PC-3 (cell line): ENCODE measurements at regions of chr5 and their contacts with region 1.

Region 1: DNA sequence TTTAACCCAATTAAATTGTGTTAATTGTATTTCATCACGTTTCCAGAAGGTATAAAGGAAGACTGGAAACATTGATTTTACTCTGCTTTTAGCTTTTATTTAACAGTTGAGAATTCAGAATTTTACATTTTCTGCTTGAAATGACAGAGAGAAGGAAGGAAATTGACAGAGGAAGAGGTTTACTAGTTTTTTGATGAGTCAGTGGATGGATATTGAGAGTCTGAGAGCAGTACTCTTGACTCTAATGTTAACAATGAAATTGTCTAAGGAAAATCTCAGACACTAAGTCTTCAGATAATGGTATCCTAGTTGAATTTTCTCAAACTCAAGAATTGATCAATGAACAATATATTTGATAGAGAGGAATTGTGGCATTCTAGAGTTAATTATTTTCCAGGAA is 60.6 kb downstream of the IPO11 start:
- DNase-seq: peak; percentile 47
- ATAC-seq: peak; percentile 60
- H3K4me3 ChIP-seq: no peak overlapping the region
- H3K27ac ChIP-seq: 0 out of 2 replicates have a peak overlapping the region, but pooled peaks have one; percentile 12
- H3K4me1 ChIP-seq: peaks cover 22% of the 10 kb centered on the region
- H3K27me3 ChIP-seq: no peaks in the 10 kb centered on the region
- CTCF ChIP-seq: no peak

Region 2: DNA sequence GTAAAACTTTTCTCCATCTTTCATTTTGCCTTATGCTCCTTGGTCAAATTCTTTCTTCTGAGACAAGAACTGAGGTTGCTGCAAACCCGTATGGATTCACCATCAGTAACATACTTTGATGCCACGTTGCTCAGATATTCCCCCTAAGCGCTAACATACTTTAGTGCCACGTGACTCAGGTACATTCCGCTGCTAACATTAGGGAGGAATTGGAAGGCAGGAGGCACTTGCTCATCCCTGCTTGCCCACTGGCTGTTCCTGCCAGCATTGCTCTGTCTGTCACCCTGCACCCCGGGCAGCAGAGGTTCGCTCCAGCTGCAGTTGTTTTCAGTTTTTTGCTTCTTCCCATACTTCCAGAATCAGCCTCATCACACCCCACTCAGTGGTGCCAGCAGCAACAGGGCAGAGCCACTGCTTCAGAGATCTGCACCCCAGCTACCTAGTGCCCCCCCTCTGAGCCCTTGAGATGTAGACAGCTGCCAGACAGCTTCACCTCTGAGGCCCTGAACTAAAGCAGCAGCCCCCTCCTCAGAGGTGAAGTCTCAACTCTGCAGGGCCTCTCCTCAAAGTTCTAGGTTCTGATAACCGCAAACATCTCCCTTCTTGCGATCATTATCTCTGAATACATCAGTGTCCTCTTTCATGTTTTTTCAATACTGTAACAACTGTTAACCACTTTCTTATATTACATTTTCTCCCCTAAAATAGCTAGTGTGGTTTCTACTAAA is 395.2 kb before region 1 on chr5:
- CTCF ChIA-PET with region 1: no interaction called
- POLR2A ChIA-PET with region 1: no interaction called
- intact Hi-C with region 1: no loop called
- DNase-seq: no peak
- ATAC-seq: no peak
- H3K4me3 ChIP-seq: no peak overlapping the region
- H3K27ac ChIP-seq: no peak overlapping the region
- H3K4me1 ChIP-seq: peaks cover 15% of the 10 kb centered on the region
- H3K27me3 ChIP-seq: no peaks in the 10 kb centered on the region
- CTCF ChIP-seq: no peak

Region 3: GRCh38 chr5:62596096-62596495 is 122.9 kb after region 1 on chr5:
- CTCF ChIA-PET with region 1: no interaction called
- POLR2A ChIA-PET with region 1: no interaction called
- intact Hi-C with region 1: loop called (anchors 5 kb)
- DNase-seq: no peak
- ATAC-seq: peak; percentile 18
- H3K4me3 ChIP-seq: no peak overlapping the region
- H3K27ac ChIP-seq: no peak overlapping the region
- H3K4me1 ChIP-seq: peaks cover 19% of the 10 kb centered on the region
- H3K27me3 ChIP-seq: no peaks in the 10 kb centered on the region
- CTCF ChIP-seq: no peak

Region 4: GRCh38 chr5:62606878-62607277 is 133.7 kb after region 1 on chr5:
- CTCF ChIA-PET with region 1: no interaction called
- POLR2A ChIA-PET with region 1: no interaction called
- intact Hi-C with region 1: no loop called
- DNase-seq: no peak
- ATAC-seq: peak; percentile 22
- H3K4me3 ChIP-seq: no peak overlapping the region
- H3K27ac ChIP-seq: no peak overlapping the region
- H3K4me1 ChIP-seq: no peaks in the 10 kb centered on the region
- H3K27me3 ChIP-seq: no peaks in the 10 kb centered on the region
- CTCF ChIP-seq: no peak